GM12878 (cell line): ENCODE measurements at regions of chr16 and their contacts with region 1.

Region 1: DNA sequence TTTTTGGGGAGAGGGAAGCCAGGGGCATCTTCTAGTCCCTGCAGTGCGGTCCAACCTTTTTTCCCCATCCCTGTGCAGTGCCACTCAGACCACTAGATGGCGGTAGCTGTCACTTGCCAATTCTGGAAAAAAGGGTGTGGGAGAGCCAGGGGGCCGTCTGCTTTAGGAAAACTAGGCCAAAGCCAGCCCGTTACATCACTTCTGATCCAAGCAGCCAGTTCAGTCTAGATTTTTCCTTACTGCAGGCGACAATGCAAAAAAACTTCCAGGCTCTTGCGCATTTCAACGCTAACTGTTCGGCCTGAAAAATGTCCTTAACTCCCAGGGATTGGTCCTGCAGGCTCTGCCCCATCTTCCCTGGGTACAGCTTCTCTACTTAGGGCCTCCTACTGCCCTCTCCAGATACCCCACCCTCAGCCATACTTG is 69.2 kb upstream of the CES5A start:
- DNase-seq: no peak
- ATAC-seq: peak; percentile 84
- H3K4me3 ChIP-seq: no peak overlapping the region
- H3K27ac ChIP-seq: no peak overlapping the region
- H3K4me1 ChIP-seq: no peaks in the 10 kb centered on the region
- H3K27me3 ChIP-seq: peaks cover 0 to 2% of the 10 kb centered on the region in 2 experiments; a peak in 2 of 4 replicates
- CTCF ChIP-seq: peak; percentile 72 to 94 (median 93)
- EP300 ChIP-seq: no peak
- POLR2A ChIP-seq: no peak
- RAD21 ChIP-seq: peak; percentile 79

Region 2: GRCh38 chr16:55901566-55902217 is 42.7 kb before region 1 on chr16:
- CTCF ChIA-PET with region 1: no interaction called
- POLR2A ChIA-PET with region 1: no interaction called
- RAD21 ChIA-PET with region 1: no interaction called
- SMC1A ChIA-PET with region 1: no interaction called
- in situ Hi-C with region 1: no loop called
- intact Hi-C with region 1: no loop called
- DNase-seq: no peak
- ATAC-seq: no peak
- H3K4me3 ChIP-seq: no peak overlapping the region
- H3K27ac ChIP-seq: no peak overlapping the region
- H3K4me1 ChIP-seq: no peaks in the 10 kb centered on the region; the same call in 1 of the 2 replicates
- H3K27me3 ChIP-seq: no peaks in the 10 kb centered on the region
- CTCF ChIP-seq: no peak
- EP300 ChIP-seq: no peak
- POLR2A ChIP-seq: no peak
- RAD21 ChIP-seq: no peak

Region 3: GRCh38 chr16:55955845-55956244 is 11.5 kb after region 1 on chr16:
- CTCF ChIA-PET with region 1: interaction called, 20 read pairs
- POLR2A ChIA-PET with region 1: no interaction called
- RAD21 ChIA-PET with region 1: no interaction called
- SMC1A ChIA-PET with region 1: interaction called, 3 read pairs
- in situ Hi-C with region 1: no loop called
- intact Hi-C with region 1: no loop called
- DNase-seq: no peak
- ATAC-seq: no peak
- H3K4me3 ChIP-seq: no peak overlapping the region
- H3K27ac ChIP-seq: no peak overlapping the region
- H3K4me1 ChIP-seq: no peaks in the 10 kb centered on the region
- H3K27me3 ChIP-seq: no peaks in the 10 kb centered on the region
- CTCF ChIP-seq: no peak
- EP300 ChIP-seq: no peak
- POLR2A ChIP-seq: no peak
- RAD21 ChIP-seq: no peak

Region 4: GRCh38 chr16:56681939-56682702 is 737.7 kb after region 1 on chr16 and contains the start of gene MT1X:
- CTCF ChIA-PET with region 1: no interaction called
- POLR2A ChIA-PET with region 1: no interaction called
- RAD21 ChIA-PET with region 1: no interaction called
- SMC1A ChIA-PET with region 1: no interaction called
- in situ Hi-C with region 1: loop called (anchors 25 kb)
- intact Hi-C with region 1: no loop called
- DNase-seq: peak; percentile 7
- ATAC-seq: peak; percentile 100
- H3K4me3 ChIP-seq: peak within 1 kb of the TSS; percentile 76
- H3K27ac ChIP-seq: peak within 1 kb of the TSS; percentile 39; the same call in 1 of the 2 replicates
- H3K4me1 ChIP-seq: peaks cover 12% of the 10 kb centered on the region
- H3K27me3 ChIP-seq: no peaks in the 10 kb centered on the region; a peak in 1 of 4 replicates
- CTCF ChIP-seq: no peak
- EP300 ChIP-seq: no peak
- POLR2A ChIP-seq: peak; percentile 80
- RAD21 ChIP-seq: no peak
- polyA plus RNA-seq, gene MT1X: 45.6 to 51.9 TPM